Activated CD4-positive, alpha-beta T cell treated with anti-CD3 and anti-CD28 coated beads for 36 hours (primary cell): ENCODE measurements at regions of chr2 and their contacts with region 1.

Region 1: DNA sequence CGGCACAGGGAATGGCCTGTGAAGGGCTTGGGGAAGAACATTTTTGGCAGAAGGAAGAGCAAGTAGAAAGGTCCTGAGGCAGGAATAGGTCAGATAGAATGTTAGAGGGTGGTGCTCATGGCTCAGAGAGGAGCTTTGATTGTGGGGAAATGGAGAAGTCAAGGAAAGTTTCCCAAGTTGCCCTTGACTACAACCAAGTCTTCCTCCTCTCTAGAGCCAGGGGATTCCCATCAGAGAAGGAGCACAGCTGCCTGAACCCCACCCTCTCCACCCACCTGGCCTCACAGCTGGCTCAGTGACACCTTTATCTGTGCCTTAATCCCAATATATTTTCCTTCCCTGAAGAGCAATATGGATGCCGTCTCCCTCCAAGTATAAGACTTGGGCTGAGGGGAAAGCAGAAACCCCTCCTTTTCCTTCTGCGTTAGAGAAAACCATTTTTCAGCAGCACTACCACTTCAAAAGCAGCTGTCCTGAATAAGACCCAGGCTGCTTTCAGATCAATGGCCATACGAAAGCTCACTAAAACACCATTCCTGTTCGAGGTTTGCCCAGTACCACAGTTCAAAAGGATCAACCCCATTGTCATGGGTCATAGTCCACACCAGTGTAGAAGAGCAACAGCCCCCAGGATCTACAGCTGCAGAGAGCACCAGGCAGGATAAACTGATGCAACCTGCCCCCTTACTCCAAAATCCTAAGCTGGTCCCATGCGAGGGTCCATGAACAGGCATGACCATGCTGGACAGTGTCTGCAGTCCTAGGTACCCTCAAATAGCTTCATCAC is 199.6 kb downstream of the AFF3 start:
- DNase-seq: no peak
- ATAC-seq: no peak
- H3K4me3 Mint-ChIP-seq: no peak overlapping the region
- H3K27ac Mint-ChIP-seq: no peak overlapping the region
- H3K4me1 Mint-ChIP-seq: no peaks in the 10 kb centered on the region
- H3K27me3 Mint-ChIP-seq: no peaks in the 10 kb centered on the region

Region 2: DNA sequence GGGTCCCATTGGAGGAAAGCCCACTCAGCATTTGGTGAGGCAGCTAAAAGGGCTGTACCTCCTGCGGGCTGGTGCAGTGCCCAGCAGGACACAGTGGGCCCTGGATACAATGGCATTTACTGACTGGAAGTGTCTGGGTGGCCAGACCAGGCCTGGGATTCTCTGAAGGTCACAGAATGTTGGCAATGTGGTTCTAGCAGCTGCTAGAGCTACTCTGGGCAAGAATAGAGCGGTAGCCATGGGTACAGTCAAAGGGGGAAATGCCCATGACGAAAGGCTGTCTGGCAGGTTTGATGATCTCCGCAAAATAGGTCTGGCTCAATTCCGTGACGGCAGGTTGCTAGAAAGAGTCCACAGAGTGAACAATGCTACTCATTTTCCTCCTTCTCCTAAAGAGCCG is 42.2 kb before region 1 on chr2:
- CTCF ChIA-PET with region 1: no interaction called
- POLR2A ChIA-PET with region 1: no interaction called
- intact Hi-C with region 1: no loop called
- DNase-seq: no peak
- ATAC-seq: no peak
- H3K4me3 Mint-ChIP-seq: no peak overlapping the region
- H3K27ac Mint-ChIP-seq: no peak overlapping the region
- H3K4me1 Mint-ChIP-seq: peaks cover 2% of the 10 kb centered on the region
- H3K27me3 Mint-ChIP-seq: no peaks in the 10 kb centered on the region

Region 3: DNA sequence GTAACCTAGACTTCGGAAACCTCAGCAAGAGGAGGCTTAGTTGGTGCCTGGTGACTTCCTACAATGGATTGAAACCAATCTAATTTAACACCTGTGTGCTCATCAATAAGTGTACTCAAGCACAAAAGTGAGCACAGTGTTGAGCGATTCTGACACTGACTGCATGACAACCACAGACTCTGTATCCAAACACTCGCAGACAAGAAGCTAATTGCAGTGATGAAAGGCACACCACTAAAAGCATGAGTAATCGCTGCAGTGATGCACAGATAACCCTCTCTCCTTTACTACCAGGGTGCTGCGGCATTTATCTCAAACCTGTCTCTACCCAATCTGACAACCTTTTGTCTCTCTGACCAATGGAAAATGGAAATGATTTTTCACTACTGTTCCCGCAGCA is 31.5 kb after region 1 on chr2:
- CTCF ChIA-PET with region 1: no interaction called
- POLR2A ChIA-PET with region 1: interaction called, 14 read pairs
- intact Hi-C with region 1: no loop called
- DNase-seq: peak; percentile 20
- ATAC-seq: peak; percentile 77
- H3K4me3 Mint-ChIP-seq: no peak overlapping the region
- H3K27ac Mint-ChIP-seq: no peak overlapping the region
- H3K4me1 Mint-ChIP-seq: peaks cover 19% of the 10 kb centered on the region
- H3K27me3 Mint-ChIP-seq: no peaks in the 10 kb centered on the region